ENCODE measurements at regions of chr9 and their contacts with region 1.

Region 1: DNA sequence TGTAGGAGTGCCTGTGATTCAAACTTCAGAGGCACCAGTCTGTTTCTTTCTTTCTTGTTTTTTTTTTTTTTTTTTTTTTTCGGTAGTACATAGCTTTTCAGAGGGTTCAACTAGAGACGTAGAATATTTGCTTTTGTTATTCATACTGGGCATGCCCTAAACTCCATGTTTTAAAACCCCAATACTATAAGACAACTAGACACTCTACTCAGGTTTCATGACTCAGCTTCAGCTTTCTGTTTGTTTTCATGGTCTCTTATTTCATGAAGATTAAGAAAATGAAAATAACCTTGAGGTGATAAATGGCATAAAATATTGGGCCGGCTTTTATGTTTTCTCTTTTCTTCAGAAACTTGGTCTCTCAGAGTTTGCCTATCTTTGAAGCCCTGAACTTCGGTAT is 2126.4 kb upstream of the ACO1 start:
- DNase-seq: no peak
- ATAC-seq: no peak
- H3K4me3 ChIP-seq: no peak overlapping the region
- H3K4me3 Mint-ChIP-seq: no peak overlapping the region
- H3K27ac ChIP-seq: no peak overlapping the region
- H3K27ac Mint-ChIP-seq: no peak overlapping the region
- H3K4me1 ChIP-seq: no peaks in the 10 kb centered on the region
- H3K4me1 Mint-ChIP-seq: no peaks in the 10 kb centered on the region
- H3K27me3 ChIP-seq: no peaks in the 10 kb centered on the region
- H3K27me3 Mint-ChIP-seq: no peaks in the 10 kb centered on the region
- CTCF ChIP-seq: no peak

Region 2: DNA sequence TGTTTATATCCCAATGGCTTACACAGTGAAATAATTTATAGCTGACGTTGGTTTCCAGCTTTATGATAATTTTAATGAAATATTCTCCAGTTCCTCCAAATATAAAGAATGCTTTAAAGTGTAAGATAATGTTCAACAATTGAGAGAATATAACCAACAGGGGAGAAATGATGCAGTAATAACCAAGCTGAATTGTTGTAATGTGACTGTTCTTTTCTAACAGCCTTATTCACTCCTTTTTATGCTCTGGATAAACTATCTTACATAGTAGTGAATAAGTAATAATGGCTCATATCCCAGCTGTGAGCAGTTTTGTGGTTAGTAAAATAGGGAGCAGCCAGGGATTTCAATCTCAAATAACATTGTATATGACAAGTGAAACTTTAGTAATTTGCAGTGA is 222.3 kb before region 1 on chr9:
- CTCF ChIA-PET with region 1: no interaction called
- POLR2A ChIA-PET with region 1: no interaction called
- intact Hi-C with region 1: no loop called
- DNase-seq: no peak
- ATAC-seq: no peak
- H3K4me3 ChIP-seq: no peak overlapping the region
- H3K4me3 Mint-ChIP-seq: no peak overlapping the region
- H3K27ac ChIP-seq: no peak overlapping the region
- H3K27ac Mint-ChIP-seq: no peak overlapping the region
- H3K4me1 ChIP-seq: no peaks in the 10 kb centered on the region
- H3K4me1 Mint-ChIP-seq: no peaks in the 10 kb centered on the region
- H3K27me3 ChIP-seq: no peaks in the 10 kb centered on the region
- H3K27me3 Mint-ChIP-seq: no peaks in the 10 kb centered on the region
- CTCF ChIP-seq: no peak

Region 3: DNA sequence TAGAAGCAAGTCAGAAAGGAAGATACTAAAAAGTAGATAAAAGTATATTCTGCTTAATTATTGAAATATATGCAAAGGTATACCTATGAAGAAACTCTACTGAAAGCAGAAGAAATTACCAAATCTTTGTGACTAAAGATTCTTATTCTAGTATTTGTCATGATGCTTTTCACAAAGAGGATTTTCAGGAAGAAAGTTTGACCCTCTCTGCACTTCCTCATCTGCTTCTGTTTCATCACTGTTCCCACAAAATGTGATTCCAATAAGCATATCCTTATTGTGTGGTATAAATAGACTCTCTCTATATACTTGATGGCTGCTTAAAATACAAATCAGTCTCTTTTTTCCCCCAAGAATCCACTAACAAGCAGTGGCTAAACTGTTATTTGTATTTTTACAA is 13.2 kb before region 1 on chr9:
- CTCF ChIA-PET with region 1: no interaction called
- POLR2A ChIA-PET with region 1: no interaction called
- intact Hi-C with region 1: loop called in 1 of 2 experiments (anchors 1 kb)
- DNase-seq: no peak
- ATAC-seq: no peak
- H3K4me3 ChIP-seq: no peak overlapping the region
- H3K4me3 Mint-ChIP-seq: no peak overlapping the region
- H3K27ac ChIP-seq: no peak overlapping the region
- H3K27ac Mint-ChIP-seq: no peak overlapping the region
- H3K4me1 ChIP-seq: no peaks in the 10 kb centered on the region
- H3K4me1 Mint-ChIP-seq: no peaks in the 10 kb centered on the region
- H3K27me3 ChIP-seq: no peaks in the 10 kb centered on the region
- H3K27me3 Mint-ChIP-seq: no peaks in the 10 kb centered on the region
- CTCF ChIP-seq: no peak

Measured in CD8-positive, alpha-beta T cell (primary cell).